ENCODE measurements at regions of chr3 and their contacts with region 1.

Region 1: DNA sequence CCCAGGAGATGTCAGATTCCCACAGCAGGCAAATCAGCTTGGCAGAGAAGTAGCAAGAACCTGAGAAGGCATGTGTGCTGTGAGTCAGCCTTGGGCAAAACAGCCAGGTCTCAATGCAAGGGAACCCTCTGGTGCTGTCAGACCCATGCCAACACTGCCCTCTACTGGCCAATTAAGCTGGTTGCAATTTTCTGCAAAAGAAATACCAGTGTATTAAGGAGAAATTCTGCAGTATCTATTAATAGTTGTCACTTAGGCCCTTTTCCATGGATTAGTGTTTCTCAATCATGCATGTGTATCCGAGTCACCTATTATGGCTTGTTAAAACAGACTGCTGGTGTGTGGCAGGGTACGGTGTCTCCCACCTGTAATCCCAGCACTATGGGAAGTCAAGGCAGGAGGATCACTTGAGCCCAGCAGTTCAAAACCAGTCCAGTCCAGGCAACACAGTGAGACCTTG is 26.2 kb downstream of the MAP4 start:
- DNase-seq: peak; percentile 41 to 95 (median 83)

Region 2: GRCh38 chr3:47824541-47825473 is 165.2 kb before region 1 on chr3:
- intact Hi-C with region 1: loop called (anchors 5 kb)
- DNase-seq: peak; percentile 31 to 92 (median 82)

Region 3: DNA sequence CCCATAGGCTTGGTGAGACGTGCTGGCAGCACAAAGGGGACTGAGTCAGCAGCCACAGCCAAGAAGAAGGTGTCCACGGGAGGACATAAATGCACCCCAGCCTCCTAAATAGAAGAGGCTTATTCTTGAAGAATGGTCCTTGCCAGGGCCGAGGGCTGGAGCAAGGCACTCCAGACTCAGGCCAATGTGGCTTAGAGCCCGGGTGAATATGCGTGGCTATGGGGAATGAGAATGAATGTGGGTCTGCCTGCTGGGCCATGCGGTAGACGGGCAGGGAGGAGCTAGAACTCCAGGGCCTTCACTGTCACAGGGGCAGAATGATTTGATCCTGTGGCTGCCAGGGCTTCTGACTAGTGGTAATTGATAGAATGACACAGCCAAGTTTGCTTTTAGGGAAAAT is 153.0 kb before region 1 on chr3:
- intact Hi-C with region 1: loop called (anchors 5 kb)
- DNase-seq: peak in 17 of 42 donors; percentile 18 to 77 (median 50)

Region 4: DNA sequence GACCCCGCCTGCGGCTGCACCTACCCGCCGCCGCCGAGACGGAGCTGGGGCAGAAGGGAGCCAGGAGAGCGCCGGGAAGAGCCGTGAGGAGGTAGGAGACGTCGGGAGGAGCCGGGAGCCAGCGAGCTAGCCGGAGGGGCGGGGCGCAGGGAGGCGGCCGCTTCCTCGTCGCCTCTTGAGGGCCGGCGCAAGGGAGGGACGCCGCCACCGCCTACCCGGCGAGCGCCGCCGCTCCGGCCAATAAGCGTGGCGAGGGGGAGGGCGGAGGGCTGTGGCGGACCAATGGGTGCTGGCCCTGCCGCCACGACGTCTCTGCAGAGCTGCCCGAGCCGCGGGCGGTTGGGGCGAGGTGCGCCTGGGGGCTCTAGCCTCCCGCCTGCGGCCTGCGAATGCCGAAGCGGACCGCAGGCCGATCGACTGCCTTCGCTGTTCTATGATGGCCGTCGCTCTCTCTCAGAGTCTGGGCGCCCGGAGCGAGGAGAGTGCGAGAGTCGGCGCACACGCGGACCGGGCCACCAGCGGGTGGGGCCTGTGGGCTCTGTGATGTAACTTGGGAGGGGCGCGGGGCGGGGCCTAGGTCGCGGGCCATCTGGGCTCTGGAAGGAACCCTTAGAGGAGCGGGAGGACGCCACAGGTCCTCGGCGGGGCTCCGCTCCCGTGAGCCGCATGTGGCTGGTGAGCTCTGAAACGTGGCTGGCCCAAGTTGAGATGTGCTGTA is 98.9 kb after region 1 on chr3:
- intact Hi-C with region 1: loop called (anchors 10 kb)
- DNase-seq: peak; percentile 90 to 98 (median 96)

Region 5: GRCh38 chr3:48194446-48195071 is 204.5 kb after region 1 on chr3:
- intact Hi-C with region 1: no loop called
- DNase-seq: peak; percentile 32 to 85 (median 65)